GM12878 (cell line): ENCODE measurements at regions of chr6 and their contacts with region 1.

Region 1: DNA sequence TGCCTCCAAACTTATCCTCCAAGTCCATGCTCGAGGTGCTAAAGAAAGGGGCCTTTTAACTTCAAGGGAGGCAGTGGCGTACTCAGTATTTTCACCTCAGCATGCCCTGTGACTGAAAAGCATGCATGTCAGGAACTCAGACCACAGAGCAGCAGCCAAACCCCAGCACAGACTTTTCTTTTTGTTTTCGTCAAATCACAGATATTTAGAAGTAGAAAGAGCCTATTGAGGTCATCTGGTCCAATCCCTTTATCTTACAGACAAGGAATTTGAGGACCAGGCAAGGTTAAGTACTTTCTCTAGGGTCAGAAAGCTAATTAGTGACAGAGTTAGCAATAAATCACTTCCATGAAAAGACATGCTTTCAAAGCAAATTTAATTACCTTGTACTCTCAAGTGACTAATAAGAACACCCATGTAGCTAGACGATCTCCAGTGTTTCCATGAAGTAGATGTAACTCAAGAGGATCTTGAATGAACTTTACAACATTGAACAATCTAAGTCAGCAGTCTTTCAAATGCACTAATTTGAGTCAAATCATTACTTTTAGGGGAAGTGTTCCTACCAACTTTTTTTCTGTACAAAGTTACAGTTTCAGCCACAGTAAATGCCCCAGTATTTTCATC is 35.9 kb downstream of the MOXD1 start:
- DNase-seq: peak; percentile 81
- ATAC-seq: peak; percentile 96
- H3K4me3 ChIP-seq: no peak overlapping the region
- H3K27ac ChIP-seq: 0 out of 2 replicates have a peak overlapping the region, but pooled peaks have one; percentile 35
- H3K4me1 ChIP-seq: peaks cover 17% of the 10 kb centered on the region; the same call in 1 of the 2 replicates
- H3K27me3 ChIP-seq: peaks cover 0 to 3% of the 10 kb centered on the region in 2 experiments; a peak in 2 of 4 replicates
- CTCF ChIP-seq: no peak
- EP300 ChIP-seq: peak; percentile 96 to 99
- POLR2A ChIP-seq: no peak
- RAD21 ChIP-seq: no peak

Region 2: GRCh38 chr6:132401120-132401945 is 35.9 kb after region 1 on chr6 and contains the start of gene MOXD1:
- CTCF ChIA-PET with region 1: interaction called, 3 read pairs
- POLR2A ChIA-PET with region 1: no interaction called
- RAD21 ChIA-PET with region 1: interaction called, 3 read pairs
- SMC1A ChIA-PET with region 1: interaction called, 3 read pairs
- in situ Hi-C with region 1: no loop called
- intact Hi-C with region 1: loop called (anchors 5 kb)
- DNase-seq: no peak
- ATAC-seq: peak; percentile 66
- H3K4me3 ChIP-seq: peak within 1 kb of the TSS; percentile 74
- H3K27ac ChIP-seq: peak within 1 kb of the TSS; percentile 22
- H3K4me1 ChIP-seq: peaks cover 22% of the 10 kb centered on the region
- H3K27me3 ChIP-seq: peaks cover 0 to 5% of the 10 kb centered on the region in 2 experiments; a peak in 2 of 4 replicates
- CTCF ChIP-seq: no peak
- EP300 ChIP-seq: no peak
- POLR2A ChIP-seq: 0 out of 2 replicates have a peak, but pooled peaks have one; percentile 18
- RAD21 ChIP-seq: no peak
- polyA plus RNA-seq, gene MOXD1: 0.03 to 0.27 TPM

Region 3: DNA sequence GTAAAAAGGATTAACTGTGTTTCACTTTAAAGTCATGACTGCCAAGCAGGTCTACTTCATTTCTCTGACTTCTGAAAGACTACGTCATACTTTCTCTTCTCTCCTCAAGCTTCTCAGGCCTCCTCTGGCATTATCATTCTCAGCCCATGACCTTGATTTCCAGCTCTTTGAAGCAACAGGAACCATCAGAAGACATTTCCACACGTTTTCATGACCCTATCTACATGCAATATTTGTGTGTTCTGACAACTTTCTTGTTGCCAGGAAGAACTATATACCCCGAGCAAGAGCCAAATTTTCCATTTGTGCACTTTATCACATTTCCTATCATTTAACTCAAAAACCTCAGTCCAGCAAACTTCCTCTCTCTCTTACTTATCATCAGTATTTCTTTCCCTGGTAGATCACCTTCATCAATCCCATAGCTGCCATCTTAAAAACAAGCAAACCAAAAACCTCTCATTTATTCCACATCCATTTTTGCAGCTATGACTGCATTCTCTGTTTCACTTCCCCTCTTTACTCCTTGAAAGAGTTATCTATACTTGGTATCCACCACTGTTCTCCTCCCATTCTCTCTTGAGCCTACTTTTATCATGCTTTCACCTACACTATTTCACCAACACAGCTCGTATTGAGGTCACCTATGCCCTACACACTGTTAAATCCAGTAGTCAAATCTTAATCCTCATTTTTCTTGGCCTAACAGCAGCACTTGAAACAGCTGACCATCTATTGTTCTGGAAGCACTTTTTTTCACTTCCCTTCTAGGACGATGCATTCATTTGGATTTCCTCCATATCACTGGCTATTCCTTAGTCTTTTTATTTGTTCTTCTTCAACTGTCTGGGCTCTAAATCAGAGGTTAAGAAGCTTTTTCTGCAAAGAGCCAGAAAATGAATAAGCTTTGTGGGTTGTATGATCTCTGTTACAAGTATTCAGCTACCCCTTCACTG is 100.4 kb after region 1 on chr6:
- CTCF ChIA-PET with region 1: no interaction called
- POLR2A ChIA-PET with region 1: no interaction called
- RAD21 ChIA-PET with region 1: no interaction called
- SMC1A ChIA-PET with region 1: no interaction called
- in situ Hi-C with region 1: no loop called
- intact Hi-C with region 1: no loop called
- DNase-seq: no peak
- ATAC-seq: peak; percentile 94
- H3K4me3 ChIP-seq: no peak overlapping the region
- H3K27ac ChIP-seq: peak overlapping the region; percentile 40; the same call in 1 of the 2 replicates
- H3K4me1 ChIP-seq: peaks cover 16% of the 10 kb centered on the region
- H3K27me3 ChIP-seq: no peaks in the 10 kb centered on the region
- CTCF ChIP-seq: no peak
- EP300 ChIP-seq: peak in 1 of 2 experiments; percentile 40; a peak in 1 of 4 replicates
- POLR2A ChIP-seq: no peak
- RAD21 ChIP-seq: no peak